A549 (cell line): ENCODE measurements at regions of chr2 and their contacts with region 1.

Region 1: GRCh38 chr2:181876614-181877063 is 14.9 kb upstream of the ITPRID2 start:
- DNase-seq: peak; percentile 20 to 95
- ATAC-seq: peak; percentile 96 to 98
- H3K4me3 ChIP-seq: no peak overlapping the region
- H3K27ac ChIP-seq: peak overlapping the region; percentile 66 to 74
- H3K4me1 ChIP-seq: peaks cover 20% of the 10 kb centered on the region
- CTCF ChIP-seq: no peak
- EP300 ChIP-seq: peak in 1 of 2 experiments; percentile 15; a peak in 1 of 5 replicates
- POLR2A ChIP-seq: no peak
- RAD21 ChIP-seq: 0 out of 5 replicates have a peak, but pooled peaks of 1 of the 2 experiments have one; percentile 17

Region 2: DNA sequence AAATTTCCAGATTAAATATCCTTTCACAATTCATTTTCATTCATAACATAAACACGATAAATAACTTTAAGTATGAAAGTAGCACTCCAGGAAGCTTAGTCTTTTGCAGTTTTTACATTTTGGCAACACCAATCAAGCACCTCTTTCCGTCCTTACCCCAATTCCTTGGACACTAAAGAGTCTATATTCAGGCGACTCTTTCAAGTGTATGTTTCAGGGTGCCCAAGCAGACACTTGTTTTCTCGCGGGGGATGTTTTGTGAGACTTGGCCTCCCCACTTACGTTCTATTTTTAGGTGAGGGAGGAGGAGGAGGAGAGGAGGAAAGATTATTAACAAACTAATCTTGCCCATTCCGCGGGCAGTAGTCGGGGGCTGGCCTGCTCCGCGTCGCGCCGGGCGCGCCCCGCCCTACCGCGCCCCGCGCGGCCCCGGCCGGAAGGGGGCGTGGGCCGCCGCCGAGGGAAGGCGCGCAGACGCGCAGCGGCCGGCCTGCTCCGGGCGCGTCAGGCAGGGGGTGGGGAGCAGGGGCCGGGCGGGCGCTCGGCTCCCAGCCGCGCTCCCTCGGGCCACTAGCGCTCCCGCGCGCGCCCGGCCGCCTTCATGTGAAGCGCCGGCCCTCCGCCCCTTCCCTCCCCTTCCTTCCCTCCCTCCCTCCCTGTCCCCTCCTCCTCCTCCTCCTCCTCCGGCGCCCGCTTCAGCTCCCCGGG is 14.8 kb after region 1 on chr2 and contains the start of gene ITPRID2:
- CTCF ChIA-PET with region 1: interaction called, 10 read pairs
- POLR2A ChIA-PET with region 1: interaction called, 12 read pairs
- DNase-seq: peak; percentile 69 to 91
- ATAC-seq: peak; percentile 93 to 95
- H3K4me3 ChIP-seq: peak within 1 kb of the TSS; percentile 89
- H3K27ac ChIP-seq: peak within 1 kb of the TSS; percentile 97 to 98
- H3K4me1 ChIP-seq: peaks cover 57% of the 10 kb centered on the region
- CTCF ChIP-seq: no peak; the same call in 2 of the 3 replicates
- EP300 ChIP-seq: no peak
- POLR2A ChIP-seq: peak; percentile 64
- RAD21 ChIP-seq: 0 out of 5 replicates have a peak, but pooled peaks of 1 of the 2 experiments have one; percentile 20
- polyA plus RNA-seq, gene ITPRID2: 87.7 and 94.3 TPM in 2 replicates